T-cell (primary cell): ENCODE measurements at regions of chr1 and their contacts with region 1.

Region 1: GRCh38 chr1:100459358-100460114 is 78.4 kb upstream of the GPR88 start:
- DNase-seq: peak; percentile 26 to 86 (median 58)
- ATAC-seq: peak; percentile 77 to 89 (median 83)
- H3K4me3 ChIP-seq: no peak overlapping the region
- H3K4me3 Mint-ChIP-seq: no peak overlapping the region
- H3K27ac ChIP-seq: peak overlapping the region; percentile 22
- H3K27ac Mint-ChIP-seq: peak overlapping the region; percentile 84 to 85
- H3K4me1 ChIP-seq: peaks cover 13 to 14% of the 10 kb centered on the region in 2 experiments
- H3K4me1 Mint-ChIP-seq: peaks cover 58 to 64% (median 61%) of the 10 kb centered on the region in 3 donors
- H3K27me3 ChIP-seq: no peaks in the 10 kb centered on the region
- H3K27me3 Mint-ChIP-seq: no peaks in the 10 kb centered on the region

Region 2: GRCh38 chr1:100358210-100358609 is 101.3 kb before region 1 on chr1:
- CTCF ChIA-PET with region 1: interaction called, 8 to 26 read pairs
- POLR2A ChIA-PET with region 1: interaction called, 9 to 11 read pairs
- DNase-seq: peak in 13 of 35 experiments; percentile 5 to 53 (median 22)
- ATAC-seq: peak in 1 of 4 experiments; percentile 30
- H3K4me3 ChIP-seq: no peak overlapping the region
- H3K4me3 Mint-ChIP-seq: peak overlapping the region; percentile 59 to 96 (median 60)
- H3K27ac ChIP-seq: no peak overlapping the region
- H3K27ac Mint-ChIP-seq: peak overlapping the region; percentile 65 to 81
- H3K4me1 ChIP-seq: peaks cover 48 to 50% of the 10 kb centered on the region in 2 experiments
- H3K4me1 Mint-ChIP-seq: peaks cover 88 to 93% (median 91%) of the 10 kb centered on the region in 3 donors
- H3K27me3 ChIP-seq: no peaks in the 10 kb centered on the region
- H3K27me3 Mint-ChIP-seq: no peaks in the 10 kb centered on the region

Region 3: GRCh38 chr1:100400404-100400803 is 59.1 kb before region 1 on chr1:
- CTCF ChIA-PET with region 1: interaction called, 5 to 27 read pairs
- POLR2A ChIA-PET with region 1: interaction called, 3 read pairs
- DNase-seq: peak; percentile 38 to 86 (median 70)
- ATAC-seq: peak; percentile 88 to 95 (median 91)
- H3K4me3 ChIP-seq: peak overlapping the region in 1 of 2 donors; percentile 1
- H3K4me3 Mint-ChIP-seq: peak overlapping the region; percentile 60 to 72 (median 68)
- H3K27ac ChIP-seq: peak overlapping the region; percentile 75
- H3K27ac Mint-ChIP-seq: peak overlapping the region; percentile 92 to 95
- H3K4me1 ChIP-seq: peaks cover 58 to 76% of the 10 kb centered on the region in 2 experiments
- H3K4me1 Mint-ChIP-seq: peaks cover 86 to 96% (median 86%) of the 10 kb centered on the region in 3 donors
- H3K27me3 ChIP-seq: no peaks in the 10 kb centered on the region
- H3K27me3 Mint-ChIP-seq: no peaks in the 10 kb centered on the region

Region 4: GRCh38 chr1:100433563-100433962 is 26.0 kb before region 1 on chr1:
- CTCF ChIA-PET with region 1: interaction called, 6 to 44 read pairs
- POLR2A ChIA-PET with region 1: interaction called in 1 of 2 experiments, 4 read pairs
- DNase-seq: no peak
- ATAC-seq: no peak
- H3K4me3 ChIP-seq: no peak overlapping the region
- H3K4me3 Mint-ChIP-seq: no peak overlapping the region
- H3K27ac ChIP-seq: peak overlapping the region; percentile 38
- H3K27ac Mint-ChIP-seq: peak overlapping the region; percentile 86 to 91
- H3K4me1 ChIP-seq: peaks cover 29 to 36% of the 10 kb centered on the region in 2 experiments
- H3K4me1 Mint-ChIP-seq: peaks cover 69 to 75% (median 74%) of the 10 kb centered on the region in 3 donors
- H3K27me3 ChIP-seq: no peaks in the 10 kb centered on the region
- H3K27me3 Mint-ChIP-seq: no peaks in the 10 kb centered on the region

Region 5: GRCh38 chr1:100510451-100510850 is 50.9 kb after region 1 on chr1:
- CTCF ChIA-PET with region 1: no interaction called
- POLR2A ChIA-PET with region 1: no interaction called
- DNase-seq: no peak
- ATAC-seq: no peak
- H3K4me3 ChIP-seq: no peak overlapping the region
- H3K4me3 Mint-ChIP-seq: no peak overlapping the region
- H3K27ac ChIP-seq: no peak overlapping the region
- H3K27ac Mint-ChIP-seq: no peak overlapping the region
- H3K4me1 ChIP-seq: no peaks in the 10 kb centered on the region
- H3K4me1 Mint-ChIP-seq: peaks cover 13 to 18% (median 16%) of the 10 kb centered on the region in 3 donors
- H3K27me3 ChIP-seq: no peaks in the 10 kb centered on the region
- H3K27me3 Mint-ChIP-seq: no peaks in the 10 kb centered on the region

Region 6: GRCh38 chr1:100657876-100658715 is 198.6 kb after region 1 on chr1:
- CTCF ChIA-PET with region 1: no interaction called
- POLR2A ChIA-PET with region 1: no interaction called
- DNase-seq: no peak
- ATAC-seq: no peak
- H3K4me3 ChIP-seq: no peak overlapping the region
- H3K4me3 Mint-ChIP-seq: no peak overlapping the region
- H3K27ac ChIP-seq: no peak overlapping the region
- H3K27ac Mint-ChIP-seq: no peak overlapping the region
- H3K4me1 ChIP-seq: no peaks in the 10 kb centered on the region
- H3K4me1 Mint-ChIP-seq: no peaks in the 10 kb centered on the region
- H3K27me3 ChIP-seq: no peaks in the 10 kb centered on the region
- H3K27me3 Mint-ChIP-seq: peaks cover 0 to 7% of the 10 kb centered on the region in 2 donors

Region 7: GRCh38 chr1:100868364-100868995 is 408.9 kb after region 1 on chr1:
- CTCF ChIA-PET with region 1: interaction called, 7 to 15 read pairs
- POLR2A ChIA-PET with region 1: no interaction called
- DNase-seq: peak in 1 of 35 experiments; percentile 70
- ATAC-seq: peak in 2 of 4 experiments; percentile 34 to 36
- H3K4me3 ChIP-seq: no peak overlapping the region
- H3K4me3 Mint-ChIP-seq: no peak overlapping the region
- H3K27ac ChIP-seq: no peak overlapping the region
- H3K27ac Mint-ChIP-seq: no peak overlapping the region
- H3K4me1 ChIP-seq: peaks cover 0 to 2% of the 10 kb centered on the region in 2 experiments
- H3K4me1 Mint-ChIP-seq: no peaks in the 10 kb centered on the region
- H3K27me3 ChIP-seq: no peaks in the 10 kb centered on the region
- H3K27me3 Mint-ChIP-seq: no peaks in the 10 kb centered on the region